ENCODE measurements at regions of chr5 and their contacts with region 1.

Region 1: GRCh38 chr5:167777746-167778145 is 513.7 kb upstream of the WWC1 start:
- DNase-seq: no peak
- ATAC-seq: no peak
- H3K4me3 ChIP-seq: no peak overlapping the region
- H3K27ac ChIP-seq: no peak overlapping the region
- H3K4me1 ChIP-seq: no peaks in the 10 kb centered on the region
- H3K27me3 ChIP-seq: peaks cover 14% of the 10 kb centered on the region; the same call in 1 of the 2 replicates
- CTCF ChIP-seq: no peak
- POLR2A ChIP-seq: no peak
- RAD21 ChIP-seq: no peak

Region 2: DNA sequence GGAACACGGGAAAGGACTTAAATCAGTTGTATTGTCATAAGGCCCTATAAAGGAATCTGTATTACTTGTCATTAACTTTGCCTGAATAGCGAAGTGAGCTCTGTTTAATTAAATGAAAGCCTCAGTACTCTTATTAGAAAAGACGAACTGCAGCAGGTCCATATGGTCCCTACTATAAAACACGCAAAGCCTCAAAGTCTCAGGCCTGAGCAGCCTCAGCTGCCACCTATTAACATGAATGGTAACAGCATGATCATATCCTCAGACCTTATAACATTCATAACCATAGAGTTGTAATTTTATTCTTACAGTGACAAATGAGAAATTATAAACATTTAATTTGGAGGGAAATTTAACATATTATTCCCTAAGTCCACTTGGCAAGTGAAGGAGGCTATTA is 600.0 kb before region 1 on chr5:
- CTCF ChIA-PET with region 1: no interaction called
- POLR2A ChIA-PET with region 1: no interaction called
- RAD21 ChIA-PET with region 1: no interaction called
- intact Hi-C with region 1: no loop called
- DNase-seq: no peak
- ATAC-seq: no peak
- H3K4me3 ChIP-seq: no peak overlapping the region
- H3K27ac ChIP-seq: no peak overlapping the region
- H3K4me1 ChIP-seq: no peaks in the 10 kb centered on the region
- H3K27me3 ChIP-seq: no peaks in the 10 kb centered on the region
- CTCF ChIP-seq: no peak
- POLR2A ChIP-seq: no peak
- RAD21 ChIP-seq: no peak

Region 3: DNA sequence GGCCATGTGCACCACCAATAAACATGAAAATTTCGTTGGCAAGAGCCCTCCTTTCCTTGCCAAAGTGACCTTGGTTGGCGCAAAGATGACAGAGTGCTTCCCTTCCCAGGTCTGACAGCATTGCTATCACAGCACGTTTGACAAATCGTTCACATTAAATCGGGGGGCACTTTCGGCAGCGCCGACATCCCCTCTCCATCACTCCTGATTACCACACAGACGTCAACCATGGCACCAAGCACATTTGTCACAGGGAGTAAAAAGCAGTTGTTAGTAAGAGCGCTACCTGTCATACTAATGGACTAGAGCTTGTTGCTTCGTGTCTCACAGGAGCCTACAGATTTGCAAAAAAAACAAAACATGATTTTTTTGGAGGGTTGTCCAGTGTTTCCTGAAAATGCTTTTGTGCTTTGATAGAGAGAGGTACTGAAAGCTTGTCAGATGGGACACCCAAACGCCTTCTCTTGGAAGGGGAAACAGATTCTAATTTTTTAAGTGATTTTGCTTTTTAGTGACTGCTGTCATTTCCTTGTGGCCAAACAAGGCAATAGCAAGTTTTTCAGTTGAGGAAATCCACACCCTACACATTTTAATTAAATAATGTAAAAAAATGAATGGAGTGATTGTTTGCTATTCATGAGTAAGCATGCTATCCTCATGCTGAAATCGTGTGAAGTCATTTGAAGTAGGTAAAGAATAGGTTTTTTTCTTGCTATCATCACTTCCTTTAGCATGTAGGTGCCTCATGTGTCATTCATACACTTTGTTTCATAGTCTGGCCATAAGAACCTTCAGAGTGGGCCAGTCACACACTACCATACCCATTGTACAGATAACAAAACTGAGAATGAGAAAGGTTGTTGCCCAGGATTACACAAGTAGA is 169.1 kb before region 1 on chr5:
- CTCF ChIA-PET with region 1: no interaction called
- POLR2A ChIA-PET with region 1: no interaction called
- RAD21 ChIA-PET with region 1: no interaction called
- intact Hi-C with region 1: no loop called
- DNase-seq: no peak
- ATAC-seq: no peak
- H3K4me3 ChIP-seq: no peak overlapping the region
- H3K27ac ChIP-seq: no peak overlapping the region
- H3K4me1 ChIP-seq: no peaks in the 10 kb centered on the region
- H3K27me3 ChIP-seq: peaks cover 9% of the 10 kb centered on the region; the same call in 1 of the 2 replicates
- CTCF ChIP-seq: peak in 1 of 3 experiments; percentile 23; a peak in 1 of 6 replicates
- POLR2A ChIP-seq: no peak
- RAD21 ChIP-seq: no peak

Region 4: GRCh38 chr5:167664222-167664804 is 113.4 kb before region 1 on chr5:
- CTCF ChIA-PET with region 1: no interaction called
- POLR2A ChIA-PET with region 1: no interaction called
- RAD21 ChIA-PET with region 1: no interaction called
- intact Hi-C with region 1: no loop called
- DNase-seq: no peak
- ATAC-seq: no peak
- H3K4me3 ChIP-seq: no peak overlapping the region
- H3K27ac ChIP-seq: no peak overlapping the region
- H3K4me1 ChIP-seq: no peaks in the 10 kb centered on the region
- H3K27me3 ChIP-seq: peaks cover 15% of the 10 kb centered on the region; the same call in 1 of the 2 replicates
- CTCF ChIP-seq: no peak
- POLR2A ChIP-seq: no peak
- RAD21 ChIP-seq: no peak

Region 5: DNA sequence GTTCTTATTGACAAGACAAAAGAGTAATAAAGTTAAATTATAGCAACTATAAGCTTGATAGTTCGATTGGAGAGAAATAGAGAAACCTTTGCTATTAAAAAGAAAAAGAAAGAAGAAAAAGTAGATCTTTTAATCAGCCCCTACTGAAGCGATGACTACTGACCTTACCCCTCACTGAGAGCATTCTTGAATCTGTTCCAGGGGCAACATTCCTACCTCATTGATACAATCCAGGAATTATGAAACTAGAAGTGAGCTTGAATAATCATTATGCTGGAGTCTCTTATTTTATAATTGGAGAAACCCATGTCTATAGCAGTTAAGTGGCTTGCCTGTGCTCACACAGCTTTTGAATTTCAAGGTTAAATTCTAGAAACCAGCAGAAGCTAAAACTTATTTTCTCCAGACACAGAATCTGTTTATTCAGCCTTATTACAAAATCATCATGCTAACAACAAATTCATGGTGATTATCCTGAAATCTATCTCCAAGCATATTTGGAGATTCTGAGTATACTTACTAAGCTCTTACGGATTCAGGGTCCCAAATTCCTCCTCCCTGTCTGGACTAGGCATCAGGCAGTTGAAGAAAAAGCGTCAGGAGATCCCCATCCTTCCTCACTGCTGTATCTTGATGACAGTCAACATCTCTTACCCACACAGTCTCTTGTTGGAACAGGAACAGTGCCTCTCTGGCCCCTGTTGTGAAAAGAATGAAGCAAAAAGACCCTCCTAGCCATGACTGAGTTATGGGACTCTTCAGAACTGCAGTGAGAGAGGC is 33.9 kb before region 1 on chr5:
- CTCF ChIA-PET with region 1: no interaction called
- POLR2A ChIA-PET with region 1: no interaction called
- RAD21 ChIA-PET with region 1: no interaction called
- intact Hi-C with region 1: loop called (anchors 2 kb)
- DNase-seq: no peak
- ATAC-seq: no peak
- H3K4me3 ChIP-seq: no peak overlapping the region
- H3K27ac ChIP-seq: no peak overlapping the region
- H3K4me1 ChIP-seq: no peaks in the 10 kb centered on the region
- H3K27me3 ChIP-seq: peaks cover 70% of the 10 kb centered on the region
- CTCF ChIP-seq: no peak
- POLR2A ChIP-seq: no peak
- RAD21 ChIP-seq: no peak

Measured in HCT116 (cell line).